Sigmoid colon (tissue), 7 donors: ENCODE measurements at regions of chr13 and their contacts with region 1.

Region 1: GRCh38 chr13:51583875-51584730 is at the start of gene WDFY2:
- DNase-seq: peak; percentile 100
- H3K4me3 ChIP-seq: peak within 1 kb of the TSS; percentile 80 to 91 (median 84)
- H3K27ac ChIP-seq: peak within 1 kb of the TSS; percentile 93 to 98 (median 94)
- H3K4me1 ChIP-seq: peaks cover 0 to 25% (median 20%) of the 10 kb centered on the region in 4 donors
- H3K27me3 ChIP-seq: no peaks in the 10 kb centered on the region
- CTCF ChIP-seq: no peak
- EP300 ChIP-seq: peak in 1 of 4 donors; percentile 56
- POLR2A ChIP-seq: peak; percentile 59 to 76
- total RNA-seq, gene WDFY2: 7.3 to 18.3 (median 9.9) TPM

Region 2: GRCh38 chr13:51452361-51453206 is 131.5 kb before region 1 on chr13 and contains the start of gene INTS6:
- intact Hi-C with region 1: loop called (anchors 1 kb)
- DNase-seq: peak; percentile 100
- H3K4me3 ChIP-seq: peak within 1 kb of the TSS; percentile 87 to 97 (median 92)
- H3K27ac ChIP-seq: peak within 1 kb of the TSS; percentile 99 to 100 (median 100)
- H3K4me1 ChIP-seq: peaks cover 0 to 38% (median 28%) of the 10 kb centered on the region in 4 donors
- H3K27me3 ChIP-seq: no peaks in the 10 kb centered on the region
- CTCF ChIP-seq: no peak
- EP300 ChIP-seq: no peak
- POLR2A ChIP-seq: peak; percentile 99 to 100
- total RNA-seq, gene INTS6: 30.0 to 43.3 (median 35.1) TPM

Region 3: DNA sequence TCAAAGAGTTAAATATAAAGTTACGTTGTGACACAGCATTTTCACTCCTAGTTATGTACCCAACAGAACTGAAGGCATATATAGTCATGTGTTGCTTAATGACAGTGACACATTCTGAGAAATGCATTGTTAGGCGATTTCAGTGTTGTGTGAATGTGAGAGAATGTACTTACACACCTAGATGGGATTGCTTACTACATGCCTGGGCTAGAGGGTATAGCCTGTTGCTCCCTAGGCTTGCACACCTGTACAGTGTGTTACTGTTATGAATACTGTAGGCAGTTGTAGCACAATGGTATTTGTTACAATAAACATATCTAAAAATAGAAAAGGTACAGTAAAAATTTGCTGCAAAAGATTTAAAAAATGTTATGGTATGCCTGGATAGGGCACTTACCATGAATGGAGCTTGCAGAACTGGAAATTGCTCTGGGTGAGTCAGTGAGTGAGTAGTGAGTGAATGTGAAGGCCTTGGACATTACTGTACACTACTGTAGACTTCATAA is 130.6 kb after region 1 on chr13:
- intact Hi-C with region 1: no loop called
- DNase-seq: no peak
- H3K4me3 ChIP-seq: no peak overlapping the region
- H3K27ac ChIP-seq: no peak overlapping the region
- H3K4me1 ChIP-seq: no peaks in the 10 kb centered on the region
- H3K27me3 ChIP-seq: no peaks in the 10 kb centered on the region
- CTCF ChIP-seq: no peak
- EP300 ChIP-seq: no peak
- POLR2A ChIP-seq: no peak

Region 4: GRCh38 chr13:51740698-51741097 is 156.6 kb after region 1 on chr13:
- intact Hi-C with region 1: loop called (anchors 5 kb)
- DNase-seq: no peak
- H3K4me3 ChIP-seq: no peak overlapping the region
- H3K27ac ChIP-seq: peak overlapping the region; percentile 68 to 79 (median 70)
- H3K4me1 ChIP-seq: peaks cover 0 to 40% (median 29%) of the 10 kb centered on the region in 4 donors
- H3K27me3 ChIP-seq: no peaks in the 10 kb centered on the region
- CTCF ChIP-seq: no peak
- EP300 ChIP-seq: no peak
- POLR2A ChIP-seq: no peak

Region 5: DNA sequence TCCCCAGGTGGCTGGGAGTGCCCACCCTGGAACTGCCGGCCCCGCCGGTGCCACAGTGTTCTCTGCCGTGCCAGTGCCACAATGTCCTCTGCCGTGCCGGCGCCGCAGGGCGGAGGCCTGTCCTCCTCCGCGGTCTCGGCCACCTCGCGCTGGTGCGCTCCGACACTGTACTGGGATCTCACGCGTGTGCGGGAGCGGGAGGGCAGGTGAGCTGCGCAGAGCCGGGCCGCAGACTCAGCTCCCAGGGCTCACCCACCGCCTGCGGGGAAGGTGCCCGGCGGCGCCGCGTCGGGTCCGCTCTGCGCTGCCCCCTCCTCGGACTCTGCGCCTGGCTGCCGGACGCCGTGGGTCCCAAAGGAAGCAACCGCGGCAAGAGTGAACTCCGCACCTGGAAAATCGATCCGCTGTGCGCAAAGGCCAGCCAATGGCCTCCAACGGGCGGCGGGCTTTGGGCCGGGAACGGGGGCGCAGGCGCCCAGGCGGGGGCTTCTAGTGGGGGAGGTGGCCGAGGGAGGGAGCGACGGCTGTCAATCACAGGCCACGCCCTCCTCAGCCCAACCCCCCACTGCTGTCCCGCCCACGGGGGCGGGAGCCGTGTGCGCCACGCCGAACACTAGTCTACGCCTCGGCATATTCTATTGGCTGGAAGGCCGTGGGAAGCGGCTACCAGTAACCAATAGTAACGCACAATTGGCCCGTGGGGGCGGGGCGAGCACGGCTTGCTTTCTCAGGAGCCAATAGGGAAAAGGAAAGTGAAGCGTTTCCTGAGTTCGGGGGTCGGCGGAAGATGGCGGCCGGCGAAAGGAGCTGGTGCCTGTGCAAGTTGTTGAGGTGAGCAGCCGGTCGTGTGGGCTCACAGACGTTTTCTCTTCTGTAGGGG is 427.8 kb after region 1 on chr13 and contains the start of gene ALG11:
- intact Hi-C with region 1: loop called (anchors 5 kb)
- DNase-seq: peak; percentile 99
- H3K4me3 ChIP-seq: peak within 1 kb of the TSS; percentile 67 to 92 (median 78)
- H3K27ac ChIP-seq: peak within 1 kb of the TSS; percentile 76 to 79 (median 77)
- H3K4me1 ChIP-seq: peaks cover 0 to 32% (median 19%) of the 10 kb centered on the region in 4 donors
- H3K27me3 ChIP-seq: no peaks in the 10 kb centered on the region
- CTCF ChIP-seq: no peak
- EP300 ChIP-seq: no peak
- POLR2A ChIP-seq: peak; percentile 61 to 65
- total RNA-seq, gene ALG11: 11.6 to 20.6 (median 17.4) TPM

Region 6: DNA sequence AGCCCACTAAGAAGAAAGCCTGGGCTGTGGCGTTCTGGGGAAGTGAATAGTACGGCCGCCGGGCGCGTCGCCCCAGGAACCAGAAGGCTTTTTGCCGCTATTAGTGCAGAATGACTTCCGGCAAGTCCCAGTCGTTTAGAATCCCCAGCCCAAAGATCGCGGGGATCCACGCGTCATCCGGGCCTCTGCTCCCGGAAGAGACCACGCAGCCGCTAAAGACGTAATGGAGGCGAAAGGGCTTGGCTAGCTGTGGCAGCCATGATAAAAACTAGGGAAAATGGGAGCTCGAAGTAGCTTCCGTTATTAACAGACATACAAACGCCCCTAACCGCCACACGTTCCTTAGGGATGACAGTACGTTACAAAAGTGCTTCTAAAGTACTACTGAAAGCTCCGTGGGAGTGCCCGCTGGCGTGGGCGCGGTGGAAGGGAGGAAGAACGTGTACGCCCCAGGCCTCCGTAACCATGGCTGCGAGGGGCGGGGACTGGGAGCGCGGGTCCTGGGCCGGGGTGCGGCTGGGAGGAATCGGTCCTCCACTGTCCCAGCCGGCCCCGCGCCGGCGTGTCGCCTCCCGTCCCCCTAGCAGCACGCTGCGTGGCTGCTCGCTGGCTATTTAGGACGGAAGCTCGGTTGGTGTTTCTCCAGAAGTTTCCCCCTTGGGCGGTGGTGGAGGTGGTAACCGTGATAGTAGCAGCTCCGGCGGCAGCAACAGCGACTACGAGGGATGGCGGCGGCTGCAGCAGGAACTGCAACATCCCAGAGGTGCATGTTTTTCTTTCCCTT is 1068.3 kb after region 1 on chr13 and contains the start of gene SUGT1:
- intact Hi-C with region 1: loop called (anchors 10 kb)
- DNase-seq: peak; percentile 98
- H3K4me3 ChIP-seq: peak within 1 kb of the TSS; percentile 70 to 85 (median 74)
- H3K27ac ChIP-seq: peak within 1 kb of the TSS; percentile 93 to 95 (median 94)
- H3K4me1 ChIP-seq: peaks cover 0 to 45% (median 33%) of the 10 kb centered on the region in 4 donors
- H3K27me3 ChIP-seq: no peaks in the 10 kb centered on the region
- CTCF ChIP-seq: peak in 2 of 4 experiments; percentile 61 to 64
- EP300 ChIP-seq: peak in 1 of 4 donors; percentile 37
- POLR2A ChIP-seq: peak; percentile 72 to 73
- total RNA-seq, gene SUGT1: 21.9 to 48.5 (median 39.4) TPM